B cell (primary cell): ENCODE measurements at regions of chr2 and their contacts with region 1.

Region 1: DNA sequence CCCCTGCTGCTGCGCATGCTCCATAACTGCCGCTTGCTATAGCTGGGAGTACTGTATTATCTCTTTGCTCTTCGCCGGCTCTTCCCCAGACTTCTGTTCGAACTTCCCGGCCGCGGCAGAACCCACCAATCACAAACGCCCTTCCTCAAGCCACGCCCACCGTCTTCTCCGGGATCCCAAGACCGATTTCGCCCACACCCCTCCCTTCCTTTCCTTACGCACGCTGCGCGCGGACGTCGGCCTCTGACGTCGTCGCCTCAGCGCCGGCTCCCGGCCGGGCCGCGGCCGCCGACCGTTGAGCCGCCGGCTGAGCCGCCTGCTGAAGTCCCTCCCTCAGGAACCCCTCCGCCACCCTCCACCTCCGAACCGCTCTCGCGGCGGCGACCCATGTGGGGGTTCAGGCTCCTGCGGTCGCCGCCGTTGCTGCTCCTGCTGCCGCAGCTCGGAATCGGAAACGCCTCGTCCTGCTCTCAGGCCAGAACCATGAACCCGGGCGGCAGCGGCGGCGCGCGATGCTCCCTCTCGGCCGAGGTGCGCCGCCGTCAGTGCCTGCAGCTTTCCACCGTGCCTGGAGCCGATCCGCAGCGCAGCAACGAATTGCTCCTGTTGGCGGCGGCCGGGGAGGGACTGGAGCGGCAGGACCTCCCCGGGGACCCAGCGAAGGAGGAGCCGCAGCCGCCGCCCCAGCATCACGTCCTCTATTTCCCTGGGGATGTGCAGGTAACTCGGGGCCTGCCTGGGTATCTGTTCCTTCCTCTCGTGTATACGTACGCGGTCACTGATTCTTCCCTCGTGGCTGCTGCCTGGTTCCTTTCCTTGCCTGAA is at the start of gene C2orf69:
- DNase-seq: peak; percentile 96
- ATAC-seq: peak; percentile 86
- H3K4me3 ChIP-seq: peak within 1 kb of the TSS; percentile 71 to 98 (median 87)
- H3K4me3 Mint-ChIP-seq: peak within 1 kb of the TSS; percentile 89
- H3K27ac ChIP-seq: peak within 1 kb of the TSS; percentile 97 to 98
- H3K27ac Mint-ChIP-seq: peak within 1 kb of the TSS; percentile 87
- H3K4me1 ChIP-seq: peaks cover 12 to 26% of the 10 kb centered on the region in 2 donors
- H3K4me1 Mint-ChIP-seq: peaks cover 43% of the 10 kb centered on the region
- H3K27me3 ChIP-seq: no peaks in the 10 kb centered on the region
- H3K27me3 Mint-ChIP-seq: no peaks in the 10 kb centered on the region
- CTCF ChIP-seq: no peak
- total RNA-seq, gene C2orf69: 12.8 and 12.9 TPM in 2 replicates

Region 2: DNA sequence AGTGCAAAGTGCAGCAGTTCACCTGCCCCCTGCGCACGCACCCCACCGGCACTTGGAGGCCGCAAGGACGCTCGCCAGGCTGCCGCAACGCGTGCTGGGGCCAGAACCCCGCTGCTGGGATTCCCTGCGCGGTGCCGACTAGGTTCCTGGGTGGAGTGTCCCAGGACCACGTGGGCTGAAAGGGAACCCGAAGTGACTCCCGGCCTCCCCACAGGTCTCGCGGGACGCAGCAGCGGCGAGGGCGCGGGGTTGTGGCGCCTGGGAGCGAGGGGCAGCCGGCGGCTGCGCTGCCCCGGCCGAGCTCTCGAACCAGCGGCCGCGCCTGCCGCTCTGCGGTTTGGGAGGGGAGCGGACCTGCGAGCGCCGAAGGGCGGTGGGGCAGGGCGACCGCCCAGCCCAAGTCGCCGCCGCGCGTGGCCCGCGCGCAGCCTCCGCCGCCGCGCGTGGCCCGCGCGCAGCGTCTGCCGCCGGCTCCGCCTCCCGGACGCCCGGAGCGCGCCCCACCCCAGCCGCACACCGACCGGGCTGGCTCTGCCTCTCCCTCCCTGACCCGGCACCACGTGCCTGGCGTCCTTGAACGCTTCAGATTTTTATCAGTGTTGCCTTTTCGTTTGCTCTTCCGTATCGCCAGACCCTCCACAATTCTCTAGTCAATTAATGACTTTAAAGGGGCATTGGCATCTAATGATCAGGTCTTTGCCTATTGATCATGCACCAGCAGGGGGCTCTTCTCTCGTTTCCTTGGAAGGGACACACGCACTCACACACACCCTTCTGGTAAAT is 60.4 kb before region 1 on chr2 and contains the start of gene FTCDNL1:
- CTCF ChIA-PET with region 1: no interaction called
- POLR2A ChIA-PET with region 1: no interaction called
- intact Hi-C with region 1: loop called (anchors 1 kb)
- DNase-seq: peak; percentile 80
- ATAC-seq: peak; percentile 94
- H3K4me3 ChIP-seq: peak within 1 kb of the TSS; percentile 56 to 88 (median 69)
- H3K4me3 Mint-ChIP-seq: peak within 1 kb of the TSS; percentile 98
- H3K27ac ChIP-seq: peak within 1 kb of the TSS; percentile 33 to 40
- H3K27ac Mint-ChIP-seq: peak within 1 kb of the TSS; percentile 88
- H3K4me1 ChIP-seq: peaks cover 5 to 11% of the 10 kb centered on the region in 2 donors
- H3K4me1 Mint-ChIP-seq: peaks cover 9% of the 10 kb centered on the region
- H3K27me3 ChIP-seq: no peaks in the 10 kb centered on the region
- H3K27me3 Mint-ChIP-seq: peaks cover 4% of the 10 kb centered on the region
- CTCF ChIP-seq: peak; percentile 49
- total RNA-seq, gene FTCDNL1: 1.6 and 1.9 TPM in 2 replicates

Region 3: DNA sequence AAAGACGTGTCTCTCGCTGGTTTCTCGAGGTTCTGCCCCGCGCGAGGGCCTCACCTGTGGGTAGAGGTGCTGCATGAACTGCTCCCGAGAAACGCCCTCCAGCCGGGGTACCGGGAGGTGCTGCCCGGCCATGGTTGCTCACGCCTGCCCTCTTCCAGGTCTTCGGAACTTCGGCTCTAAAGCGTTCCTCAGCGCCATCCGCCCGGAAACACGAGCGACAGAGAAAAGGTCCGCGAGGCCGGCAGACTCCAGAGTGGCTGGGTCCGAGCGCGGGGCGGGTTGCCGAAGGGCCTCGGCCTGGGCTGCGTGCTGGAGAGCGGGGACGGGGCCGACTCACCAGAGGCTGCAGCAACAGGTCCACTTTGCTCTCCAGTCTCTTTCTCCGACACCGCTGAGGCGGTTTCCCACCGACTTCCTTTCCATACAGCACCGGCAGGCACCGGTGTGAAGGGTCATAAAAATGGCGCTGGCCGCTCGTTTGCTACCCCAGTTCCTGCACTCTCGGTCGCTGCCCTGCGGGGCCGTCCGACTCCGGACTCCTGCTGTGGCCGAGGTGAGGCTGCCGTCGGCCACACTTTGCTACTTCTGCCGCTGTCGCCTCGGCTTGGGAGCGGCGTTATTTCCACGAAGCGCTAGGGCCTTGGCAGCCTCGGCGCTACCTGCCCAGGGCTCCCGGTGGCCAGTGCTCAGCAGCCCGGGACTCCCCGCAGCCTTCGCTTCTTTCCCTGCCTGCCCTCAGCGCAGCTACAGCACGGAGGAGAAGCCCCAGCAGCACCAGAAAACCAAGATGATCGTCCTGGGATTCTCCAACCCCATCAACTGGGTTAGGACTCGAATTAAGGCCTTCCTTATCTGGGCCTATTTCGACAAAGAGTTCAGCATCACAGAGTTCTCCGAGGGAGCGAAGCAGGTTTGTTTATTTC is 44.3 kb after region 1 on chr2 and contains the starts of genes MAIP1 and TYW5:
- CTCF ChIA-PET with region 1: no interaction called
- POLR2A ChIA-PET with region 1: no interaction called
- intact Hi-C with region 1: loop called (anchors 1 kb)
- DNase-seq: peak; percentile 88
- ATAC-seq: peak; percentile 87
- H3K4me3 ChIP-seq: peak within 1 kb of the TSS; percentile 70 to 97 (median 75)
- H3K4me3 Mint-ChIP-seq: peak within 1 kb of the TSS; percentile 98
- H3K27ac ChIP-seq: peak within 1 kb of the TSS; percentile 59 to 85
- H3K27ac Mint-ChIP-seq: peak within 1 kb of the TSS; percentile 93
- H3K4me1 ChIP-seq: peaks cover 24 to 27% of the 10 kb centered on the region in 2 donors
- H3K4me1 Mint-ChIP-seq: peaks cover 52% of the 10 kb centered on the region
- H3K27me3 ChIP-seq: no peaks in the 10 kb centered on the region
- H3K27me3 Mint-ChIP-seq: no peaks in the 10 kb centered on the region
- CTCF ChIP-seq: no peak
- total RNA-seq, gene MAIP1: 15.7 and 15.8 TPM in 2 replicates
- total RNA-seq, gene TYW5: 15.0 and 15.4 TPM in 2 replicates

Region 4: GRCh38 chr2:200509612-200510433 is 598.6 kb after region 1 on chr2 and contains the start of gene KCTD18:
- CTCF ChIA-PET with region 1: no interaction called
- POLR2A ChIA-PET with region 1: no interaction called
- intact Hi-C with region 1: loop called (anchors 1 kb)
- DNase-seq: peak; percentile 91
- ATAC-seq: peak; percentile 100
- H3K4me3 ChIP-seq: peak within 1 kb of the TSS; percentile 64 to 81 (median 66)
- H3K4me3 Mint-ChIP-seq: peak within 1 kb of the TSS; percentile 95
- H3K27ac ChIP-seq: peak within 1 kb of the TSS; percentile 49 to 79
- H3K27ac Mint-ChIP-seq: peak within 1 kb of the TSS; percentile 92
- H3K4me1 ChIP-seq: peaks cover 15 to 21% of the 10 kb centered on the region in 2 donors
- H3K4me1 Mint-ChIP-seq: peaks cover 28% of the 10 kb centered on the region
- H3K27me3 ChIP-seq: peaks cover 0 to 13% (median 13%) of the 10 kb centered on the region in 4 experiments
- H3K27me3 Mint-ChIP-seq: peaks cover 4% of the 10 kb centered on the region
- CTCF ChIP-seq: peak; percentile 83
- total RNA-seq, gene KCTD18: 20.2 and 21.3 TPM in 2 replicates